B cell (primary cell): ENCODE measurements at regions of chr4 and their contacts with region 1.

Region 1: DNA sequence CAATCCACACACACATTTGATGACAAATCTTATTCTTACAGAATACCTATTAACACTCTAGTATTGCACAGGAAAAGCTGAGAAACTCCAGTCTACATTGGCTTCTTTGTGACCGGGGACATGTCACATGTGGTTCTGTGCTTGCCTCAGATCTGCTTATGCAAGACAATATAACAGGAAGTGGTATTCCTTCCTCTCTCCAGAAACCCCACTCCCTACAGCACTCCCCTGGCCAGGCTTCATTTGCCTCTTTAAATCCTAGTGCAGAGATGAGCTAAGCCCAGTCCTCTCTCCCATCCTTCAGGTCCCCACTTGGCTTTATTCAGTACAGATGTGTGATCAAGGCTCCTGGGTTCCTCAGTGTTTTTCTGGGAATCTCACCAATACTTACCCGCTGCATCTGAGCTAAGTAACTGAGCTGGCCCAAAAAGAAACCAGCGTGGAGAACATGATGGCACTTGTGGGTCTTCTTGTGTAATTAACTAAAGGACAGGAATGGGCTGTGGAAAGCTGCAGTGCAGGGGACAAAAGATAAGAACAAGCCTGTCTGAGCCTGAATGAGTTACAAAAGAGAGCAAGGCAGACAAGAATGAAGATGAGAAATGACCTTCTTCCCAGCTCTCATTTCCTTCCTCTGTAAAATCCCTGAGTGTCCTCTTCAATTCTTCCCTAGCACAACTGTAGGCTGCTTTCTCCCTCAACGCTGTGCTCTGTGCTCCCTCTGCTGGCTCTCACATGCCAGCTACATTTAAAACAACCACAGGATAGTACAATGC is 105.6 kb downstream of the HNRNPD start:
- DNase-seq: peak; percentile 65
- ATAC-seq: peak; percentile 88
- H3K4me3 ChIP-seq: no peak overlapping the region
- H3K4me3 Mint-ChIP-seq: no peak overlapping the region
- H3K27ac ChIP-seq: no peak overlapping the region
- H3K27ac Mint-ChIP-seq: no peak overlapping the region
- H3K4me1 ChIP-seq: peaks cover 29 to 34% of the 10 kb centered on the region in 2 donors
- H3K4me1 Mint-ChIP-seq: peaks cover 34% of the 10 kb centered on the region
- H3K27me3 ChIP-seq: no peaks in the 10 kb centered on the region
- H3K27me3 Mint-ChIP-seq: peaks cover 4% of the 10 kb centered on the region
- CTCF ChIP-seq: peak; percentile 74

Region 2: GRCh38 chr4:81482326-81482725 is 785.9 kb before region 1 on chr4:
- CTCF ChIA-PET with region 1: no interaction called
- POLR2A ChIA-PET with region 1: no interaction called
- intact Hi-C with region 1: no loop called
- DNase-seq: no peak
- ATAC-seq: no peak
- H3K4me3 ChIP-seq: no peak overlapping the region
- H3K4me3 Mint-ChIP-seq: no peak overlapping the region
- H3K27ac ChIP-seq: peak overlapping the region in 1 of 2 donors; percentile 48
- H3K27ac Mint-ChIP-seq: peak overlapping the region; percentile 68
- H3K4me1 ChIP-seq: peaks cover 5 to 7% of the 10 kb centered on the region in 2 donors
- H3K4me1 Mint-ChIP-seq: peaks cover 8% of the 10 kb centered on the region
- H3K27me3 ChIP-seq: no peaks in the 10 kb centered on the region
- H3K27me3 Mint-ChIP-seq: no peaks in the 10 kb centered on the region
- CTCF ChIP-seq: no peak

Region 3: DNA sequence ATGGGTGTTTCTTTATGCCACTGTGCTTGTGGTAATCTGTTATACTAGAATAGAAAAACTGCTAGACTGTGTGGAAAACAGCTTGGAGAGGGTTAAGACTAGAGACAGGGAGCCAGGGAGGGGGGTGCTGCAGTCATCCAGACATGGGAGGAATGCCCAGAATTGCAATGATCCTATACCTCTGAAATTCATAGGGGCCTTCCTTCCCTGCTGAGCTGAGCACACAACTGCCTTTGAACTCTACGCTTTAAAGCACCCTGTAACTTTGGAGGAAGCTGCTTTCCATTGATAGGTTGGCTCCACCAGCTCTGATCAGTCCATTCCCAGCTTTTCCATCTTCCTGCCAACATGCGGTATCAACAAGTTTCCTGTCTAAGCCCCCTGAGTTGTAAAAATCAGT is 640.6 kb before region 1 on chr4:
- CTCF ChIA-PET with region 1: no interaction called
- POLR2A ChIA-PET with region 1: no interaction called
- intact Hi-C with region 1: no loop called
- DNase-seq: no peak
- ATAC-seq: no peak
- H3K4me3 ChIP-seq: no peak overlapping the region
- H3K4me3 Mint-ChIP-seq: no peak overlapping the region
- H3K27ac ChIP-seq: no peak overlapping the region
- H3K27ac Mint-ChIP-seq: no peak overlapping the region
- H3K4me1 ChIP-seq: peaks cover 29% of the 10 kb centered on the region in 2 donors
- H3K4me1 Mint-ChIP-seq: peaks cover 41% of the 10 kb centered on the region
- H3K27me3 ChIP-seq: no peaks in the 10 kb centered on the region
- H3K27me3 Mint-ChIP-seq: no peaks in the 10 kb centered on the region
- CTCF ChIP-seq: no peak

Region 4: DNA sequence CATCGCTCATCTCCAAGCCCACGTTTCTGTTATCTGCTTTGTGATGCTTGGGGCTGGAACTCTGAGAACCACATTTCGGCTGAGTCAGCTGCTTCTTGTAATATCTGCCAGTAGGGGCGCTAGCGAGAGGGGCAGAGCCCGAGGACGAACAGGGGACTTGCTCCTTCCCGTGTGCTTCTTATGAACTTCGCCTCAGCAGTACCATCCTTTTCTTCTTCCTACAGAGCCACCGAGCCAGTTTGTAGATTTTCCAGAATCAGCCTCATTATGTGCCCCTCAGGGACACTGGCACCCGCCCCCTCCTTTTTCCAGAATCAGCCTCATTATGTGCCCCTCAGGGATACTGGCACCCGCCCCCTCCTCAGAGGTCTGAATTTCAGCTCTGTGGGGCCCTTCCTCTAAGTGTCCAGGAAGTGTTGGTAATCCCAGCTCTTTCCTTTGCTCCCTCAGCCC is 354.8 kb before region 1 on chr4:
- CTCF ChIA-PET with region 1: interaction called, 7 read pairs
- POLR2A ChIA-PET with region 1: no interaction called
- intact Hi-C with region 1: loop called (anchors 2 kb)
- DNase-seq: peak; percentile 71
- ATAC-seq: peak; percentile 69
- H3K4me3 ChIP-seq: no peak overlapping the region
- H3K4me3 Mint-ChIP-seq: no peak overlapping the region
- H3K27ac ChIP-seq: no peak overlapping the region
- H3K27ac Mint-ChIP-seq: no peak overlapping the region
- H3K4me1 ChIP-seq: peaks cover 0 to 5% of the 10 kb centered on the region in 2 donors
- H3K4me1 Mint-ChIP-seq: peaks cover 4% of the 10 kb centered on the region
- H3K27me3 ChIP-seq: peaks cover 0 to 8% (median 2%) of the 10 kb centered on the region in 4 experiments
- H3K27me3 Mint-ChIP-seq: peaks cover 22% of the 10 kb centered on the region
- CTCF ChIP-seq: peak; percentile 82

Region 5: DNA sequence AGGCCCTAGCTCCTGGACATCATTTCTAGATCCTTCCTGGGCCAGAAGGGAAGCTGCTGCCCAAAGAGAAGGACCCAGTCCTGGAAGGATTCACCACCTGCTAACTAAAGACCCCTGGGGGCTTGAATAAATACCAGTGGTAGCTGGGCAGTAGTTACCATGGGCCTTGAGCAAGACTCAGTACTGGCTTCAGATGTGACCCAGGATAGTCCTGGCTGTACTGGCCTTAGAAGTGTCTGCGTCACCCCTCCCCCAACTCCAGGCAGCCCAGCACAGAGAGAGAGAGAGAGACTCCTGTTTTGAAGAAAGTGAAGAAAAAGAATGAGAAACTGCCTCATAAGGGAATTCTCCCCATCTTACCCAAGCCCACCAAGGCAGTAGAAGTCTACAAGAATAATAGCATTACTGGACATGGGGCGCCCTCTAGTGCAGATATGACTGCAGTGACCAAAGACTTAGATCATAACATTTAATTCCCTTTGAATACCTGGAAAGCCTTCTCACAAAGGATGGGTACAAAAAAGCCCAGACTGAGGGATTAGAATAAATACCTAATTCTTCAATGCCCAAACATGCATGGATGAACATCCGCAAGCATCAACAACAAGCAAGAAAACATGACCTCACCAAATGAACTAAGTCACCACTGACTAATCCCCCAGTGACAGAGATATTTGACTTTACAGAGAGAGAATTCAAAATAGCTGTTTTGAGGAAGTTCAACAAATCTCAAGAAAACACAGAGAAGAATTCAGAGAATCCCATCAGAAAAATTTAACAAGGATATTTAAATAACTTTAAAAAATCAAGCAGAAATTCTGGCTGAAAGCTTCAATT is 66.2 kb before region 1 on chr4:
- CTCF ChIA-PET with region 1: interaction called, 7 read pairs
- POLR2A ChIA-PET with region 1: no interaction called
- intact Hi-C with region 1: loop called (anchors 5 kb)
- DNase-seq: peak; percentile 69
- ATAC-seq: peak; percentile 43
- H3K4me3 ChIP-seq: no peak overlapping the region
- H3K4me3 Mint-ChIP-seq: no peak overlapping the region
- H3K27ac ChIP-seq: no peak overlapping the region
- H3K27ac Mint-ChIP-seq: no peak overlapping the region
- H3K4me1 ChIP-seq: no peaks in the 10 kb centered on the region
- H3K4me1 Mint-ChIP-seq: no peaks in the 10 kb centered on the region
- H3K27me3 ChIP-seq: no peaks in the 10 kb centered on the region
- H3K27me3 Mint-ChIP-seq: peaks cover 16% of the 10 kb centered on the region
- CTCF ChIP-seq: peak; percentile 85

Region 6: GRCh38 chr4:82247171-82247570 is 21.1 kb before region 1 on chr4:
- CTCF ChIA-PET with region 1: interaction called, 12 read pairs
- POLR2A ChIA-PET with region 1: no interaction called
- intact Hi-C with region 1: no loop called
- DNase-seq: no peak
- ATAC-seq: no peak
- H3K4me3 ChIP-seq: no peak overlapping the region
- H3K4me3 Mint-ChIP-seq: no peak overlapping the region
- H3K27ac ChIP-seq: no peak overlapping the region
- H3K27ac Mint-ChIP-seq: no peak overlapping the region
- H3K4me1 ChIP-seq: no peaks in the 10 kb centered on the region
- H3K4me1 Mint-ChIP-seq: no peaks in the 10 kb centered on the region
- H3K27me3 ChIP-seq: no peaks in the 10 kb centered on the region
- H3K27me3 Mint-ChIP-seq: no peaks in the 10 kb centered on the region
- CTCF ChIP-seq: no peak

Region 7: DNA sequence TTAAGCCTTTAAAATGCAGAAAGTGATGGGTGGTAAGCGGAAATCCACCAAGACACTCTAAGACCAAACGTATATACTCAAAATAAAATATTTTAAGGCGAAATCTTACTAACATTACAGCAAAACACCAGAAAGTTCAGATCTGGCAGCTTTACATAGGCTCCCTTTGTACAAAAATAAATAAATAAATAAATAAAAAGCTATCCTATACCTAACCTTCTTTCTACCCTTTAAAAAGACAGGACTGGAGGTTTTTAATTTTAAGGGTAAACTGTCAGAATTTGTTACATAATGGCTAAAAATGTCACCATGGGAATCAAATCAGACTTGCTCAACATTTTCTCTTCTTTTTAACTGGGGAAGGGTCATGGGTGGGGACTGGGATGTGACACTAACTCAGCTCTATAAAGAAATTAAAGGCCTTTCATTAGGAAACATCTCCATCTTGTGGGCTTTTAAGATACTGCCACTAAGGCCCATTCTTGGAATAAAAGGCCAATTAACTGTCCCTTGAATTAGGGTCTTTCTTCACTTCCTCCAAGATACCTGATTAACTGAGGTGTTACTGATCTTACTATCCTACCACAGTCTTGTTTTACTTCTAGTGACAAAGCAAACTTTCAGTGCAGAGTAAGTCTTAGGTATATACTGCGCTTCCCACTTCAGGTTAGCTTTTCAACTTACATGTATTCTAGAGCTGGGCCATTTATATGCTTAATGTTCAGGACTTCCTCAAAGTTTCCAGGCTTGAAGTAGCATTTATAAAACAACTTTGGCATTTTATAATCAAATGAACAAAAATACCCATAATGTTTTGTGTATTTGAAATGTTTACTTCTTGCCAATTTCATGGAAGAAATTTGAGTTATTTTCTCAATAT is 92.3 kb after region 1 on chr4:
- CTCF ChIA-PET with region 1: interaction called, 31 read pairs
- POLR2A ChIA-PET with region 1: no interaction called
- intact Hi-C with region 1: loop called (anchors 2 kb)
- DNase-seq: peak; percentile 66
- ATAC-seq: peak; percentile 65
- H3K4me3 ChIP-seq: no peak overlapping the region
- H3K4me3 Mint-ChIP-seq: no peak overlapping the region
- H3K27ac ChIP-seq: peak overlapping the region in 1 of 2 donors; percentile 69
- H3K27ac Mint-ChIP-seq: peak overlapping the region; percentile 74
- H3K4me1 ChIP-seq: peaks cover 37 to 67% of the 10 kb centered on the region in 2 donors
- H3K4me1 Mint-ChIP-seq: peaks cover 75% of the 10 kb centered on the region
- H3K27me3 ChIP-seq: no peaks in the 10 kb centered on the region
- H3K27me3 Mint-ChIP-seq: no peaks in the 10 kb centered on the region
- CTCF ChIP-seq: peak; percentile 85